Natural killer cell (primary cell): ENCODE measurements at regions of chr3 and their contacts with region 1.

Region 1: DNA sequence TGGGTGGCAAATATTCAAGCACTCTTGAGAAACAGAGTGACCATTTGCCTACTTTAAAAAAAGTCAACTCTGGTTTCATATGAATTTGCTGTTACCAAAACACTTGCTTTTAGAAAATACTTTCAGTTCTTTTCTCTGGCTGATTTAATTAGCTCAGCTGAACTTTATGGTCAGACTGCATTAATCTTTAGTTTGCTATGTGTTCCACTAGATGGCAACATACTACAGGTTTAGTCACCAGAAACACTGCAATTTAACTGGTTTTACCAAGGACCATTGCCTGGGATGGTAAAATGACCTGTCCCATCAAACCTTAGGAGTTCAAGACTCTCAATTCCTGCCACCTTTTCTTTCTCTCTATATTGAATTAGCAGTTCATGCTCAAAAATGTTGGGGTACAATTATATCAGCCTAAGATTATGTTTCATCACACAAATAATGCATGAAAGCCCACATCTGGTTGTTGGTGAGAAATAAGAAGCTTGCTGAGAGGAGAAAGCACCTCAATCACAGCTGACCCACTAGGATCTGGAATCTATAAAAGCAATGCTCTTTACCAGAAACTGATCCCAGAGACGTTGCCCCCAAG is 14.2 kb downstream of the EIF4E3 start:
- DNase-seq: peak in 1 of 2 donors; percentile 71
- ATAC-seq: peak; percentile 76 to 82 (median 79)
- H3K4me3 ChIP-seq: no peak overlapping the region
- H3K4me3 Mint-ChIP-seq: no peak overlapping the region
- H3K27ac ChIP-seq: no peak overlapping the region
- H3K27ac Mint-ChIP-seq: peak overlapping the region in 1 of 2 donors; percentile 72
- H3K4me1 ChIP-seq: peaks cover 23% of the 10 kb centered on the region
- H3K4me1 Mint-ChIP-seq: peaks cover 63 to 74% of the 10 kb centered on the region in 2 donors
- H3K27me3 ChIP-seq: no peaks in the 10 kb centered on the region
- H3K27me3 Mint-ChIP-seq: no peaks in the 10 kb centered on the region
- CTCF ChIP-seq: peak; percentile 74

Region 2: GRCh38 chr3:71512000-71512399 is 199.0 kb before region 1 on chr3:
- intact Hi-C with region 1: no loop called
- DNase-seq: peak in 1 of 2 donors; percentile 85
- ATAC-seq: peak; percentile 78 to 85 (median 83)
- H3K4me3 ChIP-seq: no peak overlapping the region
- H3K4me3 Mint-ChIP-seq: no peak overlapping the region
- H3K27ac ChIP-seq: no peak overlapping the region
- H3K27ac Mint-ChIP-seq: peak overlapping the region in 1 of 2 donors; percentile 63
- H3K4me1 ChIP-seq: peaks cover 18% of the 10 kb centered on the region
- H3K4me1 Mint-ChIP-seq: peaks cover 0 to 15% of the 10 kb centered on the region in 2 donors
- H3K27me3 ChIP-seq: no peaks in the 10 kb centered on the region
- H3K27me3 Mint-ChIP-seq: no peaks in the 10 kb centered on the region
- CTCF ChIP-seq: peak; percentile 40

Region 3: DNA sequence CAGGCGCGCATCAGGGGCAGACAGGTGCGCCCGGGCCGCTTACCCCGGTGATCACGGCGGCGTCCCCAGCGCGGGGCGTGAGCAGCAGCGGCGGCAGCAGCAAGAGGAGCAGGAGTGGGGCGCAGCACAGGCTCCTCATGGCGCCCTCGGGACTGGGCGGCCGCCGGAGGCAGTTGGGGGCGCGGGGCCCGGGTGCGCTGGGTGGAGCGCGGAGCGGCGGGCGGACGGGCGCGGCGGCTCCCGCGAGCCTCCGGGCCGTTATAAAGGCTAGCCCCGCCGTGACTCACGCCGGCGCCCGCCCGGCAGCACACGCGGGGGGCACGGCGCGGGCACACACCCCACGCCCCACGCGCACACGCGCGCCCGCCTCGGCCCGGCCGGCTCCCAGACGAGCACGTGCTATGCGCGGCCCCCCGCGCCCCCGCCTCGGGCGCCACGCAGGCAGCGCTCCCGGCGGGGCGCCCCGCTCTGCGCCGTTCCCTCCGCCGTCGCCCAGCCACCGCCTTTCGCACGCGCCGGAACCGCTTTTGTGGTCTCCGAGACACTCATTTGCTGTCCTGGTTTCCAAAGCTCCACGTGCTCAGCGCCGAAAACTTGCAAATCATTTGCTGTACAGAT is 74.0 kb after region 1 on chr3 and contains the start of gene PROK2:
- intact Hi-C with region 1: no loop called
- DNase-seq: peak in 1 of 2 donors; percentile 51
- ATAC-seq: peak; percentile 59 to 81 (median 60)
- H3K4me3 ChIP-seq: peak within 1 kb of the TSS; percentile 13
- H3K4me3 Mint-ChIP-seq: peak within 1 kb of the TSS; percentile 77
- H3K27ac ChIP-seq: no peak within 1 kb of the TSS
- H3K27ac Mint-ChIP-seq: no peak within 1 kb of the TSS
- H3K4me1 ChIP-seq: peaks cover 11% of the 10 kb centered on the region
- H3K4me1 Mint-ChIP-seq: peaks cover 20 to 22% of the 10 kb centered on the region in 2 donors
- H3K27me3 ChIP-seq: peaks cover 49% of the 10 kb centered on the region
- H3K27me3 Mint-ChIP-seq: peaks cover 53 to 79% of the 10 kb centered on the region in 2 donors
- CTCF ChIP-seq: no peak
- total RNA-seq, gene PROK2: 0.54 to 8.7 TPM in 2 of 3 donors, not detected in the other

Region 4: GRCh38 chr3:71859123-71859519 is 148.1 kb after region 1 on chr3:
- intact Hi-C with region 1: loop called (anchors 1 kb)
- DNase-seq: peak in 1 of 2 donors; percentile 77
- ATAC-seq: peak; percentile 66 to 82 (median 73)
- H3K4me3 ChIP-seq: no peak overlapping the region
- H3K4me3 Mint-ChIP-seq: no peak overlapping the region
- H3K27ac ChIP-seq: no peak overlapping the region
- H3K27ac Mint-ChIP-seq: no peak overlapping the region
- H3K4me1 ChIP-seq: peaks cover 5% of the 10 kb centered on the region
- H3K4me1 Mint-ChIP-seq: peaks cover 10 to 15% of the 10 kb centered on the region in 2 donors
- H3K27me3 ChIP-seq: no peaks in the 10 kb centered on the region
- H3K27me3 Mint-ChIP-seq: peaks cover 22 to 38% of the 10 kb centered on the region in 2 donors
- CTCF ChIP-seq: peak; percentile 24

Region 5: GRCh38 chr3:72818092-72818773 is 1107.2 kb after region 1 on chr3:
- intact Hi-C with region 1: loop called (anchors 5 kb)
- DNase-seq: peak in 1 of 2 donors; percentile 34
- ATAC-seq: no peak
- H3K4me3 ChIP-seq: no peak overlapping the region
- H3K4me3 Mint-ChIP-seq: no peak overlapping the region
- H3K27ac ChIP-seq: no peak overlapping the region
- H3K27ac Mint-ChIP-seq: peak overlapping the region in 1 of 2 donors; percentile 35
- H3K4me1 ChIP-seq: no peaks in the 10 kb centered on the region
- H3K4me1 Mint-ChIP-seq: peaks cover 5 to 6% of the 10 kb centered on the region in 2 donors
- H3K27me3 ChIP-seq: no peaks in the 10 kb centered on the region
- H3K27me3 Mint-ChIP-seq: no peaks in the 10 kb centered on the region
- CTCF ChIP-seq: no peak